Posterior vena cava (tissue), 2 donors: ENCODE measurements at regions of chrX and their contacts with region 1.

Region 1: DNA sequence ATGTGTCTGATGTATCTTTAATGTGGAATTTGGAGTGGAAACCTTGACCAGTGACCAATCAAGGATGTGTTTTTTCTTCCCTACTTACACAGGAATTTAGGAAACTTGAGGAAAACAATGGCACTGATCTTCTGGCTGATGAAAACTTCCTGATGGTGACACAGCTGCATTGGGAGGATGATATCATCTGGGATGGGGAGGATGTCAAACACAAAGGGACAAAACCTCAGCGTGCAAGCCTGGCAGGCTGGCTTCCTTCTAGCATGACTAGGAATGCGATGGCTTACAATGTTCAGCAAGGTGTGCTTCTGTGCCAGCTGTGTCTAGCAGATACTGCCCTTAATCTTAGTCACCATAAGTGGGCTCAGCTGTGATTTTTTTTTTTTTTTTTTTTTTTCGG is 12.6 kb downstream of the TAF1 start:
- DNase-seq: no peak

Region 2: GRCh38 chrX:71976753-71977152 is 598.0 kb after region 1 on chrX:
- intact Hi-C with region 1: loop called in 1 of 2 experiments (anchors 5 kb)
- DNase-seq: no peak